WTC11 (cell line): ENCODE measurements at regions of chr6 and their contacts with region 1.

Region 1: GRCh38 chr6:44064089-44064947 is 62.9 kb downstream of the MRPL14 start:
- DNase-seq: no peak
- ATAC-seq: no peak
- H3K4me3 Mint-ChIP-seq: no peak overlapping the region
- H3K27ac Mint-ChIP-seq: peak overlapping the region; percentile 2; the same call in 1 of the 2 replicates
- H3K4me1 Mint-ChIP-seq: peaks cover 15% of the 10 kb centered on the region
- H3K27me3 Mint-ChIP-seq: no peaks in the 10 kb centered on the region; the same call in 1 of the 2 replicates
- CTCF ChIP-seq: no peak

Region 2: GRCh38 chr6:43900911-43901732 is 163.2 kb before region 1 on chr6:
- CTCF ChIA-PET with region 1: interaction called, 11 read pairs
- POLR2A ChIA-PET with region 1: no interaction called
- DNase-seq: no peak
- ATAC-seq: no peak
- H3K4me3 Mint-ChIP-seq: no peak overlapping the region
- H3K27ac Mint-ChIP-seq: no peak overlapping the region
- H3K4me1 Mint-ChIP-seq: no peaks in the 10 kb centered on the region
- H3K27me3 Mint-ChIP-seq: no peaks in the 10 kb centered on the region
- CTCF ChIP-seq: no peak

Region 3: DNA sequence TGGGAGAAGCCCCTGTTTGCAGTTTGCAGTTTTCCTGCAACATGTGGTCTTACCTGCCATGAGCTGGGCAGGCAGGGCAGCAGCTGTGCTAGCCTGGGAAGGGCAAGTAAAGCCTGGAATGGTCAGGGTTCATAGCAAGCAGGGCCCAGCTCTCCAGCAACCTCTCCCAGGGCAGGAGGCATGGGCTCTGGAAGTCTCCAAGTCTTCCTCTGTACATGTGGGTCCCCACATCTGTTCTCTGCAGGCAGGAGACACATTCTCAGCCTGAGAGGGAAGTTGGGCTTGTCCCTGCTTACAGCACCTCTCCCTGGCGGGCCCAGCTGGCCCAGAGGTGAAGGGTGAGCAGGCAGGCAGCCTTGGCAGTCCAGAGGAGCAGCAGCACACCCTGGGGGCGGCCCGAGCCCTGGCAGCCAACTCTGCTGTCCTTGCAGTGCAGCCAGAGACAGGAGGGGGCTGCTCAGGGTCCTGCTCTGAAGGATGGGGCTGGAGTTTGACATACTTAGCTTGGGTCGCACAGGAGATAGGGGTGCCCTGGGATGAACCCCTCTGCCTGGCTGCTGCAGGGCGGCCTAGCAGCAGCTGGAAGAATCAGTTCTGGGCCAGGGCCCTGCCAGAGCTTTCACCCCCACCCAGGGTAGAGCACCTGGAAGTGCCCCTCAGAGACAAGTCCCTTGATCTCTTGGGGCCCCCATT is 113.1 kb before region 1 on chr6:
- CTCF ChIA-PET with region 1: interaction called, 25 read pairs
- POLR2A ChIA-PET with region 1: interaction called, 5 read pairs
- DNase-seq: peak; percentile 90
- ATAC-seq: peak; percentile 95
- H3K4me3 Mint-ChIP-seq: no peak overlapping the region
- H3K27ac Mint-ChIP-seq: no peak overlapping the region
- H3K4me1 Mint-ChIP-seq: peaks cover 4% of the 10 kb centered on the region
- H3K27me3 Mint-ChIP-seq: no peaks in the 10 kb centered on the region
- CTCF ChIP-seq: no peak; the same call in none of the 2 replicates

Region 4: GRCh38 chr6:43980004-43980795 is 84.1 kb before region 1 on chr6:
- CTCF ChIA-PET with region 1: interaction called, 10 read pairs
- POLR2A ChIA-PET with region 1: no interaction called
- DNase-seq: no peak
- ATAC-seq: no peak
- H3K4me3 Mint-ChIP-seq: no peak overlapping the region
- H3K27ac Mint-ChIP-seq: no peak overlapping the region
- H3K4me1 Mint-ChIP-seq: peaks cover 13% of the 10 kb centered on the region
- H3K27me3 Mint-ChIP-seq: peaks cover 5% of the 10 kb centered on the region
- CTCF ChIP-seq: no peak

Region 5: DNA sequence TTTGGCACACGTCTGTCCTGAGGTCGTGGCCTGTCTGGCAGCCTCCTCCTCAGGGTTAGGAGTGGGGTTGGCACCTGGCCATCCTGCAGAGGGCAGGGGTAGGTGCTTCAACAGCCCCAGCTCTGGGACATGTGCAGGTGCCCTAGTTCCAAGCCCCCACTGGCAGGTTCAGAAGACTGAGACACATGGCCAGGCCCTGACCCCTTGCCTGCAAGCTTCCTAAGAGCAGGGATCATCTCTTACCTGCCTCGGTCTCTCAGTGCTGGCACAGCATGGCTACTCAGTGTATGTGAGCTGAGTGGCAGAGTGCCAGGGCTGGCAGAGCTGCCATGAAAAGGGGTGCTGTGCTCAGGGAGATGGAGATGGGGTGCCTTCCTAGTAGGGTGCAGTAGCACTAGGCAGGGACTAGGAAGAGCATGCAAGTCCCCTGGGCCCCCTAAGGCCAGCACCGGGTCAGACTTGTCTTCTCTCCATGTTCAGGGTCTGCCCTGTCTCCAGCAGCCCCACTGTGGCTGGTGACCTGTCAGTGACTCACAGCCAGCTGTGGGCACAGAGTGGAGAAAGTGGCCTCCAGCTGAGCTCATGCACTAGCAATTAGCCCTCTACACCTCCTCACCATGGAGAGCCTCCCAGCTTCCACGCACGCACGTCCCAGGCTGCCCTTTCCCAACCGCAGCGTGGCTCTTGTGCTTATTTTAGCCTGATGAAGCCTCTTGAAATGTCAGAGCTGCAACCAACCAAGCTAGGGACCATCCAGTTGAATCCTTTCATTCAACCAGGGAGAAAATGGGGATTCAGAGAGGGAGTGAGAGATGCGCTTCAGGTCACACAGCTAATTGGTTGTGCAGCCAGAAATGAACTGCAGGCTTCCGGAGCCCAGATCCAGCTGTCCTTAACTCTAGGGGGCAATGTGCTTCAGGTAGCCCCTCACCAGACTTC is 53.6 kb before region 1 on chr6:
- CTCF ChIA-PET with region 1: interaction called, 23 read pairs
- POLR2A ChIA-PET with region 1: interaction called, 3 read pairs
- DNase-seq: no peak
- ATAC-seq: no peak
- H3K4me3 Mint-ChIP-seq: no peak overlapping the region
- H3K27ac Mint-ChIP-seq: no peak overlapping the region
- H3K4me1 Mint-ChIP-seq: peaks cover 27% of the 10 kb centered on the region
- H3K27me3 Mint-ChIP-seq: peaks cover 5% of the 10 kb centered on the region
- CTCF ChIP-seq: no peak

Region 6: GRCh38 chr6:44042989-44043478 is 21.3 kb before region 1 on chr6:
- CTCF ChIA-PET with region 1: interaction called, 19 read pairs
- POLR2A ChIA-PET with region 1: no interaction called
- DNase-seq: no peak
- ATAC-seq: no peak
- H3K4me3 Mint-ChIP-seq: no peak overlapping the region
- H3K27ac Mint-ChIP-seq: peak overlapping the region; percentile 30
- H3K4me1 Mint-ChIP-seq: peaks cover 37% of the 10 kb centered on the region
- H3K27me3 Mint-ChIP-seq: no peaks in the 10 kb centered on the region
- CTCF ChIP-seq: no peak

Region 7: GRCh38 chr6:44128020-44128917 is 64.0 kb after region 1 on chr6:
- CTCF ChIA-PET with region 1: no interaction called
- POLR2A ChIA-PET with region 1: no interaction called
- DNase-seq: peak; percentile 57
- ATAC-seq: peak; percentile 37
- H3K4me3 Mint-ChIP-seq: peak overlapping the region; percentile 83
- H3K27ac Mint-ChIP-seq: no peak overlapping the region
- H3K4me1 Mint-ChIP-seq: peaks cover 61% of the 10 kb centered on the region
- H3K27me3 Mint-ChIP-seq: no peaks in the 10 kb centered on the region; the same call in 1 of the 2 replicates
- CTCF ChIP-seq: no peak